ENCODE measurements at regions of chr11 and their contacts with region 1.

Region 1: GRCh38 chr11:94107363-94107762 is 21.3 kb upstream of the PANX1 start:
- DNase-seq: no peak
- ATAC-seq: no peak
- H3K4me3 ChIP-seq: no peak overlapping the region
- H3K27ac ChIP-seq: no peak overlapping the region
- H3K4me1 ChIP-seq: no peaks in the 10 kb centered on the region
- H3K27me3 ChIP-seq: no peaks in the 10 kb centered on the region
- CTCF ChIP-seq: no peak
- EP300 ChIP-seq: no peak
- POLR2A ChIP-seq: no peak
- RAD21 ChIP-seq: no peak

Region 2: DNA sequence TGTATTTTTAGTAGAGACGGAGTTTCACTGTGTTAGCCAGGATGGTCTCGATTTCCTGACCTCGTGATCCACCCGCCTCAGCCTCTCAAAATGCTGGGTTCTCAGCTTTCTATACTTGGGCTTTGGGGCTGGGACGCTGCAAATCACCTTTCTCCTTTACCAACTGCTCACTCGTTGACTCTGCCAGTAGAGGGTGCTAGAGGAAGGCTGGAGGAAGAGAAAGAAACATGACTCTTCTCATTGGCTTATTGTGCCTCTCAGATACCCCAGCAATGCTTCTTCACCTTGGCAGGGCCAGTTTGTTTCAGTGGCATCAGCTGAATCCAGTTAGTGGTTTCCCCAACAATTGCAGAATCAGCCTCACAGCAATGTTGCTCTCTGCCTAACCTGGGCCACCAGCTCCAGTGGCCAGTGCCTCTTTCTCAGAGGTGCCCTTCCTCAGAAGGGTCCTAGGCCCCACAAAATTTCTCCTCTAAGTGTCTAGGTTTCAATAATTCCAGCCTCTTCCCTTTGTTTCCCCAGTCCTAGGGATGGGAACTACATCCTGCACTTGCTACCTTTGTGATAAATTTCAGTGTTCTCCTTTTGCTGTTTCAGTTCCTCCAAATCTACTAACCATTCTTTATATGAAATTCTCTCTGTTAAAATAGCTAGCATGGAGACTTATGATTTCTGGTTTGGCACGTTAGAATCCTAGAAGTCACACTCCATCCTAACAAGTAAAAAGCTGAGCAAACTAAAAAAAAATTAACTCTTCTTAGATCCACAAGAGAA is 185.5 kb before region 1 on chr11:
- CTCF ChIA-PET with region 1: interaction called, 5 read pairs
- POLR2A ChIA-PET with region 1: no interaction called
- RAD21 ChIA-PET with region 1: no interaction called
- SMC1A ChIA-PET with region 1: no interaction called
- in situ Hi-C with region 1: no loop called
- intact Hi-C with region 1: loop called (anchors 10 kb)
- DNase-seq: peak; percentile 4
- ATAC-seq: peak; percentile 96
- H3K4me3 ChIP-seq: no peak overlapping the region
- H3K27ac ChIP-seq: no peak overlapping the region
- H3K4me1 ChIP-seq: no peaks in the 10 kb centered on the region
- H3K27me3 ChIP-seq: no peaks in the 10 kb centered on the region; a peak in 2 of 4 replicates
- CTCF ChIP-seq: peak; percentile 58 to 68 (median 65)
- EP300 ChIP-seq: no peak
- POLR2A ChIP-seq: no peak
- RAD21 ChIP-seq: peak; percentile 72

Measured in GM12878 (cell line).